Dorsolateral prefrontal cortex (tissue), 120 donors: ENCODE measurements at regions of chr18 and their contacts with region 1.

Region 1: DNA sequence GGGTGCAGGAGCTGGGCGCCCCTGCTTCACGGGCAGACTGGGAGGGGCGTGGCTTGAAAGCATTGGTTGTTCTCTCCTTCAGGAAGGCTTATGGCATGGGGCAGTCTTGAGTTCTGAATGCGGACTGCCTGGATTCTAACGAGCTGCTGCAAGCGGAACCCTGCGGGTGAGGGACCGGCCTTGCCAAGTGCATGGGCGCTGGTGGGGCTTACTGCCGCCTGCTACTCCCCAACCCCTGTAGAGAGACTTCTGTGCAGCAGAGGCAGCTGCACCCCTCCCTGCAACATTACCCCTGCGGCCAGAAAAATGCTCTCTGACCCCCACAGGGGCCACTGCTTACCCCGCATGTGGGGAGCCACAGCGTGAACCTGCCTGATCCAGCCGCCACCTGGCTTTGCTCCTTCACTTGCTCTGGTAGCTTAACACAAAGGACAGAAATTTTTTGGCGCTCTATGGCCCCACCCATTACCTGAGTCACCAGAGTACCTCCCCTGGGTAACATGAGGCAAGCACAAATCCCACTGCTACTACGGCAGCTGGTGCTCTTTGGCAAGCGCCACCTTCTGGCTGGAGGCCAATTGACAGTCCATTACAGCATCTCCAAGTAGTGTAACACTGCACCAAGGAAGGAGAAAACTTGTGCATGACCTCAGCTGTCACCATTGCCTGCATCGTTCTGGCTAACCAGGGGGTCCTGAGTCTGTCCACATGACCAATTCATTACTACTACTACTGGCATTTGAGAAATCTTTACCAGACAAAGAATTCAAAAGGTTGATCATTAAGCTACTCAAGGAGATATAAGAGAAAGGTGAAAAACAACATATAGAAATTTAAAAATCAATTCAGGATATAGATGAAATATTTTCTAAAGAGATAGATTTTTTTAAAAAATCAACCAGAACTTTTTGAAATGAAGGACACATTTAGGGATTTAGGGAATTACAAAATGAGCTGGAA is 35.4 kb downstream of the MYL12B start:
- DNase-seq: peak; percentile 61 to 93 (median 80)
- H3K4me3 ChIP-seq: peak overlapping the region; percentile 32 to 78 (median 64)
- H3K27ac ChIP-seq: peak overlapping the region in 12 of 59 donors; percentile 10 to 63 (median 42)
- H3K27me3 ChIP-seq: no peaks in the 10 kb centered on the region
- CTCF ChIP-seq: peak in 50 of 56 donors; percentile 10 to 63 (median 44)

Region 2: GRCh38 chr18:3411854-3412268 is 114.6 kb after region 1 on chr18:
- intact Hi-C with region 1: loop called in 1 of 2 experiments (anchors 10 kb)
- DNase-seq: no peak
- H3K4me3 ChIP-seq: peak overlapping the region in 48 of 59 donors; percentile 6 to 54 (median 32)
- H3K27ac ChIP-seq: no peak overlapping the region
- H3K27me3 ChIP-seq: peaks cover 0 to 4% (median 0%) of the 10 kb centered on the region in 45 donors
- CTCF ChIP-seq: no peak

Region 3: GRCh38 chr18:3454365-3455089 is 157.2 kb after region 1 on chr18:
- intact Hi-C with region 1: loop called in 1 of 2 experiments (anchors 5 kb)
- DNase-seq: no peak
- H3K4me3 ChIP-seq: peak overlapping the region in 55 of 59 donors; percentile 0 to 87 (median 40)
- H3K27ac ChIP-seq: peak overlapping the region in 56 of 59 donors; percentile 7 to 99 (median 96)
- H3K27me3 ChIP-seq: peaks cover 0 to 36% (median 4%) of the 10 kb centered on the region in 45 donors
- CTCF ChIP-seq: peak; percentile 43 to 80 (median 67)